ENCODE measurements at regions of chr17 and their contacts with region 1.

Region 1: DNA sequence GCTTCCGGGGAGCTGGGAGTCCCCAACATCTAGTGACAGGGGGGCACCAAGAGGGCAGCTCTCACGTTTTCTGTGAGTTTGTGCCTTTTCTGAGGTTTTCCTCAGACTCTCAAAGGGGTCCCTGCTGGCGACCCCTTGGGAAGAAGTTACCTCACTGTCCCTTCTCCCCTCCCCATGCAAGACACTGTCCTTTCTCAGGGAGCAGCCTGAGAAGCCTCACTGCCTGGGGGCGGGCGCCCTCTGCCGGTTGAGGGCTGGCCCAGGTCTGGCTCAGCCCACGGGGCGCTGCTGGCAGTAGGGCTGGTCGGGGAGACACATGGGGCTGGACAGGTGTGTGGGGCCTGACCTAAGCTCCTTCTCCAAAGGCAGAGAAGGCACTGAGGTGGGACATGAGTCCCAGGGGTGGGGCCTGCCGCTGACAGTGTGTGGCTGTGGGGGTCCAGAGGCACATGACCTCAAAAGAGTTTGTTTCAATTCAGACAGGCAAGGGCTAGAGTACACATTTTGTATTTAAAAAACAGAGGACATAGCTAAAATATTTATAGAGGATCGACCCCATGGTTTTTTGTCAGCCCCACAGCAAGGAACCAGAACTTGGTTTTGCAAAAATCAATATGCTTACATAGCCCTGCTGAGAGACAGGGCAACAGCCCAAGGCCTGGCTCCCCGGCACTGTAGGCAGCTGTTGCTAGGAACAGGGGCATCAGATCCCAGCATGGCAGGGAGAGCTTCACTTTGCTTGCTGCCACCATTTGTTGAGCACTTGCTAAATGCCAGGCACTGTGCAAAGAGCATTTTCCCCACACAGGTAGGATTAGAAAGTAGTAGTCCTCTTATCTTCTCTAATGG is 18.5 kb upstream of the ALDH3A1 start:
- DNase-seq: peak; percentile 84
- H3K4me3 ChIP-seq: no peak overlapping the region
- H3K27ac ChIP-seq: no peak overlapping the region
- H3K4me1 ChIP-seq: peaks cover 0 to 7% (median 0%) of the 10 kb centered on the region in 4 donors
- H3K27me3 ChIP-seq: no peaks in the 10 kb centered on the region
- CTCF ChIP-seq: peak; percentile 85 to 96 (median 94)
- EP300 ChIP-seq: no peak
- POLR2A ChIP-seq: no peak

Region 2: DNA sequence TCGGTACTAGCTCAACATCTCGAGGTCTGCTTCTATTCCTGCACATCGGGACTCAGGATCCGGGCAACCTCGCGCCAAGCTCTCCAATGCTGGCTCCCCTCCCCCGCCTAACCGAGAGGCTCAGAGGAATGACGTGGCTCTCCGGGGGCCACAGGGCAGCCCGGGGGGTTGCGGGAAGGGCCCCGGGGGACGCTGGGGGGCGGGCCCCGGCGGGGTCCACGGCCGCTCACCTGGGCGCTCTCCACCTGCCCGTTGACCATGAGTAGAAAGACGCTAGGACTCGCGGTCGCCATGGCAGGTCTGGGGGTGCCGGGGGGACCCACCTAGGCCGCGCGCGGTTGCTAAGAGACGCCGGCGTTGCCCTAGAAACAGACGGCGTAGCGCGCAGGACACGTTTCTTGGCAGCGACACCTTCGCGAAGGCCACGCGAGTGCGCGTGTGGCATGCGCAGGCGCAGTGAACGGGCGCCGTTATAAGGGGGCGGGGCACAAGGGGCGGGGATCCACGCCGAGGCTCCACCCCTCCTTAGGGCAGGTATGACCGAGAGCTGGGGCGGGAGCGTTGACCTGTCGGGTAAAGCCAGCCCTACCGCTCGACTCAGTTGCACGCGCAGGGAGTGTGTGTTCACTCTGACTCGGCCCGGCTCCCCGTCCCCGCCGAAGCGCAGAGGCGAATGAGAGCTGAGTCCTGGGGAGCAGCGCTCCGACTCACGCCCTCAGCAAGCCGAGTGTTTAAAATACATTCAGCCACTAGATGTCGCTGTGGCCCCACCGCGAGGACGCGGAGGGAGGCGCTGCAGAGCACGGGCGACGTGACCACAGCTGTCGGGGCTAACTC is 404.2 kb before region 1 on chr17 and contains the start of gene B9D1:
- in situ Hi-C with region 1: loop called (anchors 10 to 25 kb)
- intact Hi-C with region 1: loop called (anchors 10 kb)
- DNase-seq: peak; percentile 96
- H3K4me3 ChIP-seq: peak within 1 kb of the TSS; percentile 61 to 78 (median 69)
- H3K27ac ChIP-seq: peak within 1 kb of the TSS; percentile 71 to 88 (median 85)
- H3K4me1 ChIP-seq: peaks cover 8 to 14% (median 12%) of the 10 kb centered on the region in 4 donors
- H3K27me3 ChIP-seq: no peaks in the 10 kb centered on the region
- CTCF ChIP-seq: peak; percentile 95 to 100 (median 98)
- EP300 ChIP-seq: no peak
- POLR2A ChIP-seq: no peak
- total RNA-seq, gene B9D1: 6.0 to 17.6 (median 9.5) TPM

Region 3: DNA sequence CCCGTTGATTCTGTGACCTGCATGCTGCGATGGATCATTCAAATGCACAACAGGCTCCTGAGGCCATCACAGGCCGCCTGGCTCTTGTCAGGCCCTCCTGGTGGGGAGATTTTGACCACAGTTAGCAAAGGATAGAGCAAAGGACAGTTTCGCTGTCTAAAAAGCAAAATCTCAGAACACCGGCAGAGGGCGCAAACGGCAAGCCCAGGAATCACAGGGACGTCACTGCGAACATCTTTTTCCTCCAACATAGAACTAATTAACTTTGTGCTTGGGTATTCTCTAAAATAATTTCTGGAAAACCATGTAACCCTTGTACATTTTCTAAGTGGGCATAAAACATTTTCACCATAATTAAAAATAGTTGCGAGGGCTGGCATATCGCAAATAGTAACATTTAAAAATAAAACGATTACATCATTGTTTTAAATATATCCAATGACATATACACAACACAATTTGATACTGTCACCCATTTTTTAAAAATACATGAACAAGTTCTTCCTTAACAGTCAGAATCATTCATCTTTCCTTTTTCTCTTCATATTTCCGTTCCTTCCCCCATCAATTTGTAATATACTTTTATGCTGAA is 252.7 kb before region 1 on chr17:
- in situ Hi-C with region 1: loop called in 3 of 4 experiments (anchors 5 to 10 kb)
- intact Hi-C with region 1: loop called (anchors 1 kb)
- DNase-seq: peak; percentile 75
- H3K4me3 ChIP-seq: no peak overlapping the region
- H3K27ac ChIP-seq: peak overlapping the region in 2 of 4 donors; percentile 8 to 11
- H3K4me1 ChIP-seq: no peaks in the 10 kb centered on the region
- H3K27me3 ChIP-seq: no peaks in the 10 kb centered on the region
- CTCF ChIP-seq: peak; percentile 83 to 93 (median 89)
- EP300 ChIP-seq: no peak
- POLR2A ChIP-seq: no peak

Region 4: GRCh38 chr17:19520641-19521040 is 246.0 kb before region 1 on chr17:
- in situ Hi-C with region 1: loop called in 3 of 4 experiments (anchors 5 to 10 kb)
- intact Hi-C with region 1: no loop called
- DNase-seq: no peak
- H3K4me3 ChIP-seq: no peak overlapping the region
- H3K27ac ChIP-seq: no peak overlapping the region
- H3K4me1 ChIP-seq: no peaks in the 10 kb centered on the region
- H3K27me3 ChIP-seq: no peaks in the 10 kb centered on the region
- CTCF ChIP-seq: no peak
- EP300 ChIP-seq: no peak
- POLR2A ChIP-seq: no peak

Region 5: GRCh38 chr17:19672009-19672750 is 94.5 kb before region 1 on chr17:
- in situ Hi-C with region 1: loop called in 2 of 4 experiments (anchors 25 kb)
- intact Hi-C with region 1: no loop called
- DNase-seq: peak; percentile 56
- H3K4me3 ChIP-seq: no peak overlapping the region
- H3K27ac ChIP-seq: peak overlapping the region; percentile 44 to 65 (median 64)
- H3K4me1 ChIP-seq: peaks cover 0 to 29% (median 9%) of the 10 kb centered on the region in 4 donors
- H3K27me3 ChIP-seq: no peaks in the 10 kb centered on the region
- CTCF ChIP-seq: peak in 3 of 5 experiments; percentile 19 to 45 (median 26)
- EP300 ChIP-seq: no peak
- POLR2A ChIP-seq: no peak

Region 6: DNA sequence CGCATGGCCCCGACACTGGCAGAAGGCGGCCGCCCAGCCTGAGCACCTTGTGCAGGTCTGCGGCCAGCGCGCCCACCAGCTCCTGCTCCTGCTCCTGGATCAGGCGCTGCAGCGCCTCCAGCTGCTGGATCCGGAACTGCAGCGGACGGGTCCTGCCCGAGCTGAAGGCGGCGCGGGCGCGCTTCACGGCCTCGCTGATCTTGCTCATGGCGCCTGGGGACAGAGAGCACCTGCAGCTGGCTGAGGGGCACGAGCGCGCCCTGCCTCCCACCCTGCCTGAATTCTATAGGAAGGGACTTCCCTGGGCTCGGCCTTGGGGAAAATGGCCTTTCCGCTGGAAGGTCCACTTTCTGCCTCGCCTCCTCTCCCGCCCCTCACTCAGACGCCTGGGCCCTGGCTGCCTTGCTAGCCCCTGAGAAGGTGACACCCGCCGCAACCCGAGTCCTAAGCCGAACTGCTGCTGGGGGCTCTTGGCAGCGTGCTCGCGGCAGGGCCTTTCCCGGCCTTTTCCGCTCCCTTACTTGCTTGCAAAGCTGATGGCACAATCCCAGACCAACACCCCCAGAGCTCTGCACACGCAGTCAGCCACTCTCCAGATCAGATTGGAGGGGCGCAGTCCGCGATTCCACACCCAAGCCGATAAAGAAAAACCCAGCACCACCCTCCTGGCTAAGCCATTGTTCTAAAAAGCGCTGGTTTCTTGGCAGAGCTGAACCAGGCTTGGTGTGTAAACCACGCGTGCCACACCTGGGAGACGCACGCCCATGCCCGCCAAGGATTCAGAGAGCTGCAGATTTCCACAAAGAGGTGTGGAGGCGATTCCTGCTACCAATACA is 21.5 kb before region 1 on chr17:
- in situ Hi-C with region 1: no loop called
- intact Hi-C with region 1: no loop called
- DNase-seq: peak; percentile 96
- H3K4me3 ChIP-seq: peak overlapping the region; percentile 33 to 61 (median 44)
- H3K27ac ChIP-seq: peak overlapping the region; percentile 72 to 88 (median 76)
- H3K4me1 ChIP-seq: peaks cover 5 to 33% (median 25%) of the 10 kb centered on the region in 4 donors
- H3K27me3 ChIP-seq: no peaks in the 10 kb centered on the region
- CTCF ChIP-seq: peak; percentile 88 to 98 (median 95)
- EP300 ChIP-seq: no peak
- POLR2A ChIP-seq: peak; percentile 10

Region 7: GRCh38 chr17:20226814-20227482 is 460.3 kb after region 1 on chr17:
- in situ Hi-C with region 1: no loop called
- intact Hi-C with region 1: loop called (anchors 5 kb)
- DNase-seq: peak; percentile 81
- H3K4me3 ChIP-seq: no peak overlapping the region
- H3K27ac ChIP-seq: no peak overlapping the region
- H3K4me1 ChIP-seq: peaks cover 0 to 4% (median 4%) of the 10 kb centered on the region in 4 donors
- H3K27me3 ChIP-seq: no peaks in the 10 kb centered on the region
- CTCF ChIP-seq: peak; percentile 72 to 88 (median 76)
- EP300 ChIP-seq: no peak
- POLR2A ChIP-seq: no peak

Measured in transverse colon (tissue), 4 donors.